GM12878 (cell line): ENCODE measurements at regions of chr9 and their contacts with region 1.

Region 1: GRCh38 chr9:19925817-19926503 is 137.1 kb upstream of the SLC24A2 start:
- DNase-seq: peak; percentile 48
- ATAC-seq: peak; percentile 98
- H3K4me3 ChIP-seq: peak overlapping the region; percentile 56; the same call in 1 of the 2 replicates
- H3K27ac ChIP-seq: no peak overlapping the region
- H3K4me1 ChIP-seq: no peaks in the 10 kb centered on the region; the same call in 1 of the 2 replicates
- H3K27me3 ChIP-seq: no peaks in the 10 kb centered on the region; a peak in 2 of 4 replicates
- CTCF ChIP-seq: peak; percentile 94 to 97 (median 96)
- EP300 ChIP-seq: no peak
- POLR2A ChIP-seq: no peak
- RAD21 ChIP-seq: peak; percentile 98

Region 2: DNA sequence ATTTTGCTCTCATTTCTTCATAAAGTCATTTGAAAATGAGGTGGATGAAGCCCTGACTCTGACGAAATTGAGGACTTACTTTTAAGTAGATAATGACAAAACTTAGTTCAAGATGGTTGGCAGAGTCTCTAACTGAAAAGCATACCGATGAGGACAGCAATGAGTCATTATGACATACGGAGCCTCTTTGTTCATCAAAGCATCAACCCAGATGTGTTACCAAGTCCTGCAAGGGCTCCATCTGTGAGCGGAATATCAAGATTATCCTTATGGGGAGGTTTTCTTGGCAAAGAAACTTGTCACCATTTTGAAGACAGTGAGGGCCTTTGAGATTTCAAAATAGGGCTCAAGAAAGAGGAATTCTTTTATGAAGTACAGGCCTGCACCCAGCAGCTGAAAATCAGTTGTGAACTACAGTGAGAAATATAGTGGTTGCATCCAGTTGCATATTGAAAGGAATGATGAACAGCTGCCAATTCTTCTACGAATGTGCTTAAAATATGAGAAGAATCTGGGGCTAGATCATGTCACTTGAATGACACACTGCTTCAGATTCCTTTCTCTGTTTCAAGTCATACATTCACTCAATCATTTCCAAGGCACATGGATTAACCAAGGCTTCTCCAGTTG is 50.6 kb before region 1 on chr9:
- CTCF ChIA-PET with region 1: no interaction called
- POLR2A ChIA-PET with region 1: no interaction called
- RAD21 ChIA-PET with region 1: no interaction called
- SMC1A ChIA-PET with region 1: no interaction called
- in situ Hi-C with region 1: no loop called
- intact Hi-C with region 1: no loop called
- DNase-seq: no peak
- ATAC-seq: no peak
- H3K4me3 ChIP-seq: no peak overlapping the region
- H3K27ac ChIP-seq: no peak overlapping the region
- H3K4me1 ChIP-seq: no peaks in the 10 kb centered on the region
- H3K27me3 ChIP-seq: no peaks in the 10 kb centered on the region
- CTCF ChIP-seq: no peak
- EP300 ChIP-seq: no peak
- POLR2A ChIP-seq: no peak
- RAD21 ChIP-seq: no peak

Region 3: GRCh38 chr9:19999491-20000057 is 73.6 kb after region 1 on chr9:
- CTCF ChIA-PET with region 1: no interaction called
- POLR2A ChIA-PET with region 1: no interaction called
- RAD21 ChIA-PET with region 1: no interaction called
- SMC1A ChIA-PET with region 1: no interaction called
- in situ Hi-C with region 1: no loop called
- intact Hi-C with region 1: loop called (anchors 2 kb)
- DNase-seq: peak; percentile 92
- ATAC-seq: peak; percentile 92
- H3K4me3 ChIP-seq: no peak overlapping the region
- H3K27ac ChIP-seq: peak overlapping the region; percentile 59
- H3K4me1 ChIP-seq: peaks cover 18% of the 10 kb centered on the region
- H3K27me3 ChIP-seq: no peaks in the 10 kb centered on the region
- CTCF ChIP-seq: no peak
- EP300 ChIP-seq: peak; percentile 70 to 81; a peak in 2 of 4 replicates
- POLR2A ChIP-seq: no peak
- RAD21 ChIP-seq: no peak

Region 4: DNA sequence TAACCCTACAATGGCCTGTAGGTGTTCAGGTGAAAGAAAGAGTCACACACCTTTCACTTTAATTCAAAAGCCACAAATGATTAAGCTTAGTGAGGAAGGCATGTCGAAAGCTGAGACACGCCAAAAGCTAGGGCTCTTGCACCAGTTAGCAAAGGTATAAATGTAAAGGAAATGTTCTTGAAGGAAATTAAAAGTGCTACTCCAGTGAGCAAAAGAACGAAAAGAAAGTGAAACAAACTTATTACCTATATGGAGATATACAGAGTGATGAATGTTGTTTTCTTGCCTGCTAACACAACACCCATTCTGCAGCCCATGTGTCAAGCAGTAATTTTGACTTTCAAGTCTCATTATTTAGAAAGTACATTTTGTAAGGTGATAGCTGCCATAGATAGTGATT is 117.1 kb after region 1 on chr9:
- CTCF ChIA-PET with region 1: no interaction called
- POLR2A ChIA-PET with region 1: no interaction called
- RAD21 ChIA-PET with region 1: no interaction called
- SMC1A ChIA-PET with region 1: no interaction called
- in situ Hi-C with region 1: no loop called
- intact Hi-C with region 1: loop called (anchors 5 kb)
- DNase-seq: no peak
- ATAC-seq: peak; percentile 80
- H3K4me3 ChIP-seq: peak overlapping the region; percentile 30; the same call in 1 of the 2 replicates
- H3K27ac ChIP-seq: no peak overlapping the region
- H3K4me1 ChIP-seq: peaks cover 4% of the 10 kb centered on the region; the same call in 1 of the 2 replicates
- H3K27me3 ChIP-seq: no peaks in the 10 kb centered on the region
- CTCF ChIP-seq: no peak
- EP300 ChIP-seq: no peak
- POLR2A ChIP-seq: no peak
- RAD21 ChIP-seq: no peak

Region 5: GRCh38 chr9:20356403-20357035 is 430.6 kb after region 1 on chr9:
- CTCF ChIA-PET with region 1: no interaction called
- POLR2A ChIA-PET with region 1: no interaction called
- RAD21 ChIA-PET with region 1: interaction called, 3 read pairs
- SMC1A ChIA-PET with region 1: interaction called, 6 read pairs
- in situ Hi-C with region 1: loop called (anchors 10 kb)
- intact Hi-C with region 1: loop called (anchors 5 kb)
- DNase-seq: peak; percentile 36
- ATAC-seq: peak; percentile 39
- H3K4me3 ChIP-seq: no peak overlapping the region
- H3K27ac ChIP-seq: no peak overlapping the region
- H3K4me1 ChIP-seq: peaks cover 29% of the 10 kb centered on the region
- H3K27me3 ChIP-seq: no peaks in the 10 kb centered on the region
- CTCF ChIP-seq: peak; percentile 62 to 80 (median 68)
- EP300 ChIP-seq: no peak
- POLR2A ChIP-seq: no peak
- RAD21 ChIP-seq: peak; percentile 97